ENCODE measurements at regions of chr19 and their contacts with region 1.

Region 1: GRCh38 chr19:57769345-57770131 is at the start of gene ZNF586:
- DNase-seq: peak; percentile 93
- H3K4me3 Mint-ChIP-seq: peak within 1 kb of the TSS; percentile 84
- H3K27ac Mint-ChIP-seq: peak within 1 kb of the TSS; percentile 73
- H3K4me1 Mint-ChIP-seq: peaks cover 10% of the 10 kb centered on the region
- H3K27me3 Mint-ChIP-seq: no peaks in the 10 kb centered on the region
- CTCF ChIP-seq: no peak
- total RNA-seq, gene ZNF586: 13.4 and 13.9 TPM in 2 replicates

Region 2: DNA sequence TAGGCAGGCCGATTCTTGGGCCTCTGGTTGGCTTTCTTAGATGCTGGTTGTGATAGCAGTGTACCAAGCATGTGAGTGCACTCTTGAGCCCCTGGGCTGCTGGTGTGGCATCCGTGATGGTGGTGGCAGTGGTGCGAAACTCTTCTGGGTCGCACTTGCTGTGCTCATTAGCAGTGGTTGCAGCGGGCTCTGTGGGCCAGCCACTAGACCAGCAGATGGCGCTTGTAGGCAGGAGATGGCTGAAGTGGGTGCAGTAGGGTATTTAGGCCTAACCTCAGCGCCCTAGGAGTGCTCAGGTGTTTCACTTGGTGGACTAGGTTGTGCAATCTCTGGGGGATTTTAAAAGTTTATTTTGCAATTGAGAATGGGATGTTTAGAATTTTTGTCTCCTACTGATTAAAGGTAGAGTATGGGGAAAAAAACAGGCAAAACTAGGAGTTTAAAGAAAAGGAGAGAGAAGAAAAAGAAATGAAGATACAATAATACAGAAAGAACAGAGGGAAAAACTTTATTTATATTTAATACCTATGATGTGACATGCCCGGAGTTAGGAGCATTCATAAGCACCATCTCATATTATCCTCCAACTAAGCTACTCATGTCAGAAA is 362.9 kb before region 1 on chr19:
- CTCF ChIA-PET with region 1: no interaction called
- POLR2A ChIA-PET with region 1: no interaction called
- intact Hi-C with region 1: no loop called
- DNase-seq: peak; percentile 56
- H3K4me3 Mint-ChIP-seq: no peak overlapping the region
- H3K27ac Mint-ChIP-seq: peak overlapping the region; percentile 13
- H3K4me1 Mint-ChIP-seq: peaks cover 10% of the 10 kb centered on the region
- H3K27me3 Mint-ChIP-seq: no peaks in the 10 kb centered on the region
- CTCF ChIP-seq: peak; percentile 78

Region 3: GRCh38 chr19:57642396-57643046 is 127.0 kb before region 1 on chr19:
- CTCF ChIA-PET with region 1: no interaction called
- POLR2A ChIA-PET with region 1: no interaction called
- intact Hi-C with region 1: no loop called
- DNase-seq: no peak
- H3K4me3 Mint-ChIP-seq: no peak overlapping the region
- H3K27ac Mint-ChIP-seq: no peak overlapping the region
- H3K4me1 Mint-ChIP-seq: no peaks in the 10 kb centered on the region
- H3K27me3 Mint-ChIP-seq: no peaks in the 10 kb centered on the region
- CTCF ChIP-seq: no peak

Region 4: GRCh38 chr19:57746580-57747471 is 22.7 kb before region 1 on chr19 and contains the start of gene ZNF776:
- CTCF ChIA-PET with region 1: interaction called, 3 read pairs
- POLR2A ChIA-PET with region 1: interaction called, 18 read pairs
- intact Hi-C with region 1: no loop called
- DNase-seq: peak; percentile 95
- H3K4me3 Mint-ChIP-seq: peak within 1 kb of the TSS; percentile 99
- H3K27ac Mint-ChIP-seq: peak within 1 kb of the TSS; percentile 99
- H3K4me1 Mint-ChIP-seq: peaks cover 11% of the 10 kb centered on the region
- H3K27me3 Mint-ChIP-seq: no peaks in the 10 kb centered on the region
- CTCF ChIP-seq: no peak
- total RNA-seq, gene ZNF776: 9.9 and 13.3 TPM in 2 replicates

Region 5: DNA sequence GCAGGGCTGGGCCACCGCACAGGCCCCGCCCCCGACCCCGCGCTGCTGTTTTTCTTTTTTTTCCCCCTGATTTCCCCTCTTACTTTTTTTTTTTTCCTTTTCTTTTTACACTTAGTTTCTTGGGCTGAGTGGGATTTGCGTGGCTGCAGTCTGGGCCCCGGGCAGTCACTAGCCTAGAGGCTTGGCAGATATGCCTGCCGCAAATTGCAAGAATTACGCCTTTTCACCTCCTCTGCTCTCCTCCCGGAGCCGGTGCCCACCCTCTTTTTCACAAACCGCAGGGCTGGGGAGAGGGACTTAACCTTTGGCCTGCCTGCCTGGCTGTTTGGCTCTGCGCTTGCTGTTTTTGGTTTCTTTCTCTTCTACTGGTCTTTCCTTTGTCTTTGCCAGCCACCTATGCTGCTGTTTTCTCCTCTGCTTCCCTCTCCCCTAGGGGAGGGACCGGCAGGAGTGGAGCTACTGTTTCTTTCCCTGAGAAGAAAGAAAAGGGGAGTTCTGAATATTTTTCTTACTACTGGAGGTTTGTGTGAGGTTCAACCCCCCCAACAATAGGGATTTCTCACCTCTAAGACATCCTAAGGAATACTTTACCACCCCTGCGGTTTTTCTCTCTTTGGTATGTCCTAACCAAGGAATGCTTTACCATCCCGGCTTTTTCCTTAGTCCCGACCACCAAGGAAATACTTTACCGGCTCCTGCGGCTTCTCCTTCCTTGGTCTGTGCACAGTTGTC is 34.2 kb after region 1 on chr19:
- CTCF ChIA-PET with region 1: no interaction called
- POLR2A ChIA-PET with region 1: interaction called, 10 read pairs
- intact Hi-C with region 1: no loop called
- DNase-seq: peak; percentile 62
- H3K4me3 Mint-ChIP-seq: peak overlapping the region; percentile 82
- H3K27ac Mint-ChIP-seq: peak overlapping the region; percentile 94
- H3K4me1 Mint-ChIP-seq: peaks cover 42% of the 10 kb centered on the region
- H3K27me3 Mint-ChIP-seq: no peaks in the 10 kb centered on the region
- CTCF ChIP-seq: no peak

Region 6: GRCh38 chr19:57954996-57955395 is 185.5 kb after region 1 on chr19:
- CTCF ChIA-PET with region 1: no interaction called
- POLR2A ChIA-PET with region 1: no interaction called
- intact Hi-C with region 1: no loop called
- DNase-seq: no peak
- H3K4me3 Mint-ChIP-seq: no peak overlapping the region
- H3K27ac Mint-ChIP-seq: no peak overlapping the region
- H3K4me1 Mint-ChIP-seq: no peaks in the 10 kb centered on the region
- H3K27me3 Mint-ChIP-seq: no peaks in the 10 kb centered on the region
- CTCF ChIP-seq: no peak

Measured in MCF 10A (cell line).